AG04450 (cell line): ENCODE measurements at regions of chr16 and their contacts with region 1.

Region 1: DNA sequence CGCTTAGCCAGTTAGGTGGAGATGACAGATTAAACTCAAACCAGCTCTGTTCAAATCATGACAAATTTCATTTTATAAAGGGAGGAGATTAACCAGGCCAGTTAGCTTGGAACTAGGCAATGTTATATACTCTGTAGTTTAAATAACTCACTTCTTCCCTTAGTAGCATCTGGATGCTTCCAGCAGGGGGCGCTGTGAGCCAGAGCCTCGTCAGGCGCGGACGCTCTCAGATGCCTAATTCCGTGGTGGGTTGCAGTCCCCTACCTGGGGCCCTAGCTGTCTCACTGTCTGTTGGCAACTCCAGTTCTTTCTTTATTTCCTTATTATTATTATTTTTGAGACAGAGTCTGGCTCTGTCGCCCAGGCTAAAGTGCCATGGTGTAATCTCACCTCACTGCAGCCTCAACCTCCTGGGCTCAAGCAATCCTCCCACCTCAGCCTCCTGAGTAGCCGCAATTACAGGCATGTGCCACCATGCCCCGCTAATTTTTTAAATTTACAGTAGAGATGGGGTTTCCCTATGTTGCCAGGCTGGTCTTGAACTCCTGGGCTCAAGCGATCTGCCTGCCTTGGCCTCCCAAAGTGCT is 17.3 kb upstream of the WFDC1 start:
- DNase-seq: no peak
- H3K4me3 ChIP-seq: no peak overlapping the region
- H3K27ac ChIP-seq: no peak overlapping the region
- H3K27me3 ChIP-seq: peaks cover 12% of the 10 kb centered on the region
- CTCF ChIP-seq: peak; percentile 86

Region 2: GRCh38 chr16:83856792-83857191 is 420.5 kb before region 1 on chr16:
- CTCF ChIA-PET with region 1: no interaction called
- POLR2A ChIA-PET with region 1: no interaction called
- DNase-seq: no peak
- H3K4me3 ChIP-seq: no peak overlapping the region
- H3K27ac ChIP-seq: no peak overlapping the region
- H3K27me3 ChIP-seq: peaks cover 12% of the 10 kb centered on the region
- CTCF ChIP-seq: no peak

Region 3: GRCh38 chr16:84266451-84266850 is 10.9 kb before region 1 on chr16:
- CTCF ChIA-PET with region 1: interaction called, 22 read pairs
- POLR2A ChIA-PET with region 1: no interaction called
- DNase-seq: no peak
- H3K4me3 ChIP-seq: no peak overlapping the region
- H3K27ac ChIP-seq: no peak overlapping the region
- H3K27me3 ChIP-seq: peaks cover 19% of the 10 kb centered on the region
- CTCF ChIP-seq: no peak

Region 4: DNA sequence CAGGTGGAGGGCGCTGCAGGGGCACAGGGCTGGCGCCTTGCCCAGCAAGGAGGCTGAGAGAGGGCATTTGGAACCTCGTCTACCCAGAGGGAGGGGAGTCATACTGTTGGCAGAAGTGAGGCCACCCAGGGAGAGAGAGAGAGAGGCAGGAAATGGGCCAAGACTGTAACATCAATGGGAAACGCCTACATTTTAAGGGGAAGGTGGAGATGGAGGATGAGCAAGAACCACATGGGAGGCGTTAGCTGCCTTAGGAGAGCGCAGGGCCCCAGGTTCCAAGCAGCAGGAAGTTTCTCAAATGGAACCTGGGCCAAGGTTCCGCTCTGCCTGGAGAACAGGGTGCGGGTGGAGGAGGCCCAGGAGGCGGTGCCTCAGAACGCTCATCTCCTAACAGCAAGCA is 14.7 kb after region 1 on chr16:
- CTCF ChIA-PET with region 1: interaction called, 18 read pairs
- POLR2A ChIA-PET with region 1: no interaction called
- DNase-seq: no peak
- H3K4me3 ChIP-seq: no peak overlapping the region
- H3K27ac ChIP-seq: no peak overlapping the region
- H3K27me3 ChIP-seq: peaks cover 14% of the 10 kb centered on the region
- CTCF ChIP-seq: no peak

Region 5: GRCh38 chr16:84302111-84302954 is 25.0 kb after region 1 on chr16:
- CTCF ChIA-PET with region 1: interaction called, 86 read pairs
- POLR2A ChIA-PET with region 1: no interaction called
- DNase-seq: no peak
- H3K4me3 ChIP-seq: no peak overlapping the region
- H3K27ac ChIP-seq: peak overlapping the region; percentile 87
- H3K27me3 ChIP-seq: peaks cover 8% of the 10 kb centered on the region
- CTCF ChIP-seq: no peak

Region 6: GRCh38 chr16:84308120-84308519 is 30.8 kb after region 1 on chr16:
- CTCF ChIA-PET with region 1: interaction called, 86 read pairs
- POLR2A ChIA-PET with region 1: no interaction called
- DNase-seq: peak; percentile 11
- H3K4me3 ChIP-seq: no peak overlapping the region
- H3K27ac ChIP-seq: no peak overlapping the region
- H3K27me3 ChIP-seq: peaks cover 8% of the 10 kb centered on the region
- CTCF ChIP-seq: peak; percentile 62

Region 7: DNA sequence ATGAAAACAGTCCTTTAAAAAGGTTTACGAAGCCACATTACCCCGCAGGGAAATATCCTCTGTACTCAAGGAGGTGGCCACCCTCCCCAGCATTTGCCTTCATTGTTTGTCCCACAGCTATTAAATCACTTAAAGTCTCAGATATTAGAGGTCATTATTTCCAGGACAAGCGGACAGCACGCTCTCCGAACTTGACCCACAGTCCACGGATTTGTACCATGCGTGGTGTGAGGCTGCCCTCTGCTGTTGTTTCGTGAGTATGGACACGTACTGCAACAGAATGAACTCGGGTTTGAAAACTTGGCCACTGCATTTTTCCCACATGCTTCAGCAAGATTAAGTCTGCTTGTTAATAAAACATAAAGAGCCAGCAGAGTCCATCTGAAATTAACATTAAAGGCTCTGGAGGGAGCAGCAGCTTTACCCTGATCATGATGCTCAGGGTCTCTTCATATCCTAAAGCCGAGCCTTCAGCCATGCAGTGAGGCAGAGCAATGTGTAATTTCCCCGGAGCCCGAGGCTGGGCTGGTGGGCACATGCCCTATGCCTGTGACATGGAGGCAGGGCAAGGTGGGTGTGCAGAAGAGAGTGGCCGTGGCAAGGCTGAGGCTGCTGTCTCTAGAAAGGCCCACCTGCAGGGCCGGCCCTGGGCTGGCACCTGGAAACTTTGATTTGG is 207.4 kb after region 1 on chr16:
- CTCF ChIA-PET with region 1: interaction called, 46 read pairs
- POLR2A ChIA-PET with region 1: no interaction called
- DNase-seq: peak; percentile 36
- H3K4me3 ChIP-seq: no peak overlapping the region
- H3K27ac ChIP-seq: no peak overlapping the region
- H3K27me3 ChIP-seq: no peaks in the 10 kb centered on the region
- CTCF ChIP-seq: peak; percentile 82